ENCODE measurements at regions of chr11 and their contacts with region 1.

Region 1: DNA sequence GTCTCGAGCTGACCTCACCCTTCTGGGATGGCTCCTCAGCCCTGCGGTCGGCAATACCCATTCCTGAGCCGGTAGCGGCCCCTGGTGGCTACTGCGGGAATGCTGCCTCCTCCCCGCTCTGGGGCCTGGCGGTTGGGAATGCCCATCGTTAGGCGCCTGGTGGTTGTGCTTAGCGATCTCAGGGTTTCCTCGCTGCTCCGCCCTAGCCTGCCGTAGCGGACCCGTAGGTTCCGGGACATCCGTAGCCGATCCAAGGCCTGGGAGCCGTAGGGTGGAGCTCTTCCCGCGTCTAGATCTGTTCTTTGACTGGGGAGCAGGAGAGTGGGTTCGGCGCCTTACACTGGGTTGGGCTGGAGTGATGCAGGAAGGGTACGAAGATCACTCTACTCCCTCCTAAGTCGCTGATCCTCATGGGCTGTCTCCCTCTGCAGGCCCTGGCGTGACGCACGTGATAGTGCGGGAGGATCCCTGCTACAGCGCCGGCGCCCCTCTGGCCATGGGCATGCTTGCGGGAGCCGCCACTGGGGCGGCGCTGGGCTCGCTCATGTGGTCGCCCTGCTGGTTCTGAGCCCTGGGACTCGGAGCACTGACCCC is 14.8 kb downstream of the PLEKHB1 start:
- DNase-seq: peak; percentile 99
- ATAC-seq: peak; percentile 88
- H3K4me3 Mint-ChIP-seq: peak overlapping the region; percentile 72
- H3K27ac Mint-ChIP-seq: peak overlapping the region; percentile 33; the same call in 1 of the 2 replicates
- H3K4me1 Mint-ChIP-seq: peaks cover 13% of the 10 kb centered on the region
- H3K27me3 Mint-ChIP-seq: peaks cover 72% of the 10 kb centered on the region
- CTCF ChIP-seq: peak; percentile 91

Region 2: DNA sequence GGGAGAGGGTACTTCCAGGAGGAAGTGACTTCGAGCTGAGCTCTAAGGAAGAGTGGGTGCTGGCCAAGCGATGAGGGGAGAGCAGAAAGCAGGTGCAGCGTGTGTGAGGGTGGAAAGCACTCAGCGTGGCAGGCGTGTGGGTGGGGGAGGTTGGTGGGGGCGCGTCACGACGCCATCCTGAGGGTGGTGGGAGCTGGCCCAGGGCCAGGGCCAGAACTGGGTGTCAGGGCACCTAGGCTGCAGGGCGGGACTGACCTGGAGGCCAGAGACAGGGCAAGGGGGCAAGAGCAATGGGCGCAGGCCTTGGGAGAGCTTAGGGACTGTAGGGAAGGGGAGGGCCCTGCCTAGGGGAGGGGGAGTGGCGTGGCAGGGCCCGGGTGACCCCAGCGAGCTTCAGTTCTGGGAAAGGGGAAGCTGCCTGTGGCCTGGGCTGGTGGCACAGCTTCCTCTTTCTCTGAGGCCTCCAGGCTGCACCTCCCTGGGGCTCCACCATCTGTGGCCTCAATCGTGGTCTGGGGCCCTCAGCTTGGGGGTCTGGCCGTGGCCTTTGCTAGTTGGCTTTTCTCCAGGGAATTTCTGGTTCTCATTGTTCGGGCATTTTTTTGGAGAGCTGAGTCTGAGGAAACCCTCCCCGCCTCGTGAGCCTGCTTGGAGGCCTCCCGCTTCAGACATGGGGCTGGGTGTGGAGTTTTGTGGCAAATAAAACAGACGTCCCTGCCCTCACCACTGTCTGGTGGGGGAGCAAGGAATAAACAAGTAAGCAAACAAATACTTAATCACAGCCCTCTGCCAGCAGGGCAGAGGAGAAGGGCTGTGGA is 276.1 kb before region 1 on chr11:
- CTCF ChIA-PET with region 1: interaction called, 18 read pairs
- POLR2A ChIA-PET with region 1: no interaction called
- DNase-seq: no peak
- ATAC-seq: no peak
- H3K4me3 Mint-ChIP-seq: no peak overlapping the region
- H3K27ac Mint-ChIP-seq: peak overlapping the region; percentile 32; the same call in 1 of the 2 replicates
- H3K4me1 Mint-ChIP-seq: peaks cover 11% of the 10 kb centered on the region
- H3K27me3 Mint-ChIP-seq: no peaks in the 10 kb centered on the region
- CTCF ChIP-seq: no peak

Region 3: DNA sequence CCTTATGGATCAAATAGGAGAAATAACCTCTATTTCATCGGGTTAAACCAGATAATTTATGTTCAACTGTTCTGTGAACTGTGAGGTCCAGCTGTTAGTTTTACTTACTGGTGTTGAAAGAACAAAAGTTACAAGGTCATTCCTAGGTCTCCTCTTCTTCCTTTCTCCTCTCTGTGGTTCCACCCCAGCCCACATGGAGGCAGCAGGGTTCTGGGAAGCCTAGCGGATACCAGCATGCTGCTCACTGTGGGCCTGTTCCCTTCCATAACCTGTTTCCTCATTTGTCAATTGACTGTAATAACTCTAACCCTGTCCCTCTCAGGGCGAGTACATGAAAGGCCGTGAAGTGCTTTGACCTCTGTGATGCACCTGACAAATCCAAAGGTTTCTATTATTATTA is 257.1 kb before region 1 on chr11:
- CTCF ChIA-PET with region 1: interaction called, 54 read pairs
- POLR2A ChIA-PET with region 1: no interaction called
- DNase-seq: peak; percentile 66
- ATAC-seq: peak; percentile 91
- H3K4me3 Mint-ChIP-seq: no peak overlapping the region
- H3K27ac Mint-ChIP-seq: no peak overlapping the region
- H3K4me1 Mint-ChIP-seq: peaks cover 6% of the 10 kb centered on the region
- H3K27me3 Mint-ChIP-seq: no peaks in the 10 kb centered on the region
- CTCF ChIP-seq: no peak

Region 4: GRCh38 chr11:73478738-73479347 is 182.3 kb before region 1 on chr11:
- CTCF ChIA-PET with region 1: interaction called, 35 read pairs
- POLR2A ChIA-PET with region 1: no interaction called
- DNase-seq: peak; percentile 28
- ATAC-seq: peak; percentile 88
- H3K4me3 Mint-ChIP-seq: no peak overlapping the region
- H3K27ac Mint-ChIP-seq: no peak overlapping the region
- H3K4me1 Mint-ChIP-seq: peaks cover 28% of the 10 kb centered on the region
- H3K27me3 Mint-ChIP-seq: no peaks in the 10 kb centered on the region
- CTCF ChIP-seq: peak; percentile 52

Region 5: GRCh38 chr11:73507086-73507485 is 154.0 kb before region 1 on chr11:
- CTCF ChIA-PET with region 1: no interaction called
- POLR2A ChIA-PET with region 1: no interaction called
- DNase-seq: no peak
- ATAC-seq: no peak
- H3K4me3 Mint-ChIP-seq: no peak overlapping the region
- H3K27ac Mint-ChIP-seq: no peak overlapping the region
- H3K4me1 Mint-ChIP-seq: no peaks in the 10 kb centered on the region
- H3K27me3 Mint-ChIP-seq: no peaks in the 10 kb centered on the region
- CTCF ChIP-seq: no peak

Region 6: GRCh38 chr11:73625696-73626318 is 35.3 kb before region 1 on chr11:
- CTCF ChIA-PET with region 1: interaction called, 328 read pairs
- POLR2A ChIA-PET with region 1: interaction called, 4 read pairs
- DNase-seq: peak; percentile 83
- ATAC-seq: peak; percentile 67
- H3K4me3 Mint-ChIP-seq: no peak overlapping the region
- H3K27ac Mint-ChIP-seq: no peak overlapping the region
- H3K4me1 Mint-ChIP-seq: peaks cover 28% of the 10 kb centered on the region
- H3K27me3 Mint-ChIP-seq: peaks cover 96% of the 10 kb centered on the region
- CTCF ChIP-seq: peak; percentile 92

Region 7: DNA sequence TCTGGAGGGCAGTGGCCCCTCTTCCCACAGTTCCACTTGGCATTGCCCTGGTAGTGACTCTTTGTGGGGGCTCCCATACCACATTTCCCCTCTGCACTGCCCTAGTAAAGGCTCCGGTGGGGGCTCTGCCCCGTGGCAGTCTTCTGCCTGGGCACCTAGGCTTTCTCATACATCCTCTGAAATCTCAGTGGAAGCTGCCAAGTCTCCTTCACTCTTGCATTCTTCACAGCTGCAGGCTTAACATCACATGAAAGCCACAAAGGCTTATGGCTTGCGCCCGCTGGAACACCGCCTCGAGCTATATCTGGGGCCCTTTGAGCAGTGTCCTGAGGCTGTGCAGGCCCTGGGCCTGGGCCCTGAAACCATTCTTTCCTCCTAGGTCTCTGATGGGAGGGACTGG is 10.6 kb after region 1 on chr11:
- CTCF ChIA-PET with region 1: interaction called, 14 read pairs
- POLR2A ChIA-PET with region 1: no interaction called
- DNase-seq: no peak
- ATAC-seq: peak; percentile 38; the same call in 1 of the 2 replicates
- H3K4me3 Mint-ChIP-seq: no peak overlapping the region
- H3K27ac Mint-ChIP-seq: no peak overlapping the region
- H3K4me1 Mint-ChIP-seq: peaks cover 2% of the 10 kb centered on the region
- H3K27me3 Mint-ChIP-seq: no peaks in the 10 kb centered on the region
- CTCF ChIP-seq: no peak

Measured in WTC11 (cell line).